ENCODE measurements at regions of chr13 and their contacts with region 1.

Region 1: DNA sequence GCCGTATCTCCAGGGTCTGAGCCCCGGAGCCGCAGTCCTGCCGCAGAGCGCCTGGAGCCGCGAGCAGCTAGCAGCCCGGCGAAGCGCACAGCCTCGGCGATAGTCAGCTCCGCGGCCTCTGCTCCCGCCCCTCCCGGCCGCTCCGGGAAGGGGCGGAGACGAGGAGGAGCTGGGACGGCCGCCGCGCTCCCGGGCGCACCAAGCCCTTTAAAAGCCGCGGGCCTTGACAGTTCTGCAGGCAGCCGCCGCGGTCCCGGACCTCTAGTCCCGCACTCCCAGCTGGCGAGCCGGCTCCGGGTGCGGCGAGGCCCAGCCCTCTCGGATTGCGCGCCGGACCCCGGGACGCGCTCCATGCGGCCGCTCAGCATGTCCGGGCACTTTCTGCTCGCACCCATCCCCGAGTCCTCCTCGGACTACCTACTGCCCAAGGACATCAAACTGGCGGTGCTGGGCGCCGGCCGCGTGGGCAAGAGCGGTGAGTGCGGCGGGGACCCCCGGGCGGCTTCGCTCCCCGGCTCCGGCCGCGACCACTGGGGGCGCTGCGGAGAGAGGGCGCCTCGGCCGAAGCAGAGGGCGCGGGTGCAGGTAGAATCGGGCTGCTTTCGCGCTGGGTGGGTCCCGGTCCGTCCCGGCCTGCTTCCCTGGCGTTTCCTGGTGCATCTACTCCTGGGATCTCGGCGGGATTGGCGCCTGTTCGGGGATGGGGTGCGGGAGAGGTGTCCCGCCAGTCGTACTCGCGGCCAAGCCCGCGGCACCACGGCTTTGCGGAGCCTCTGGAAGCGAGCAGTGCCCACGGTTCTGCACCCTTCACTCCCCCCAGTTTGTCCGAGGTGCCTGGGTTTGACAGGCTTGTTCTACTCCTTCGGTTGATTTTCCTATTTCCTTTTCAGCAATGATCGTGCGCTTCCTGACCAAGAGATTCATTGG is at the start of gene RASL11A:
- DNase-seq: peak; percentile 65
- H3K4me3 Mint-ChIP-seq: peak within 1 kb of the TSS; percentile 83
- H3K27ac Mint-ChIP-seq: no peak within 1 kb of the TSS
- H3K4me1 Mint-ChIP-seq: peaks cover 8% of the 10 kb centered on the region
- H3K27me3 Mint-ChIP-seq: peaks cover 3% of the 10 kb centered on the region
- total RNA-seq, gene RASL11A: 1.5 to 1.6 TPM

Region 2: GRCh38 chr13:26971990-26972887 is 298.6 kb before region 1 on chr13:
- CTCF ChIA-PET with region 1: no interaction called
- intact Hi-C with region 1: loop called (anchors 1 kb)
- DNase-seq: peak; percentile 65
- H3K4me3 Mint-ChIP-seq: no peak overlapping the region
- H3K27ac Mint-ChIP-seq: peak overlapping the region; percentile 1
- H3K4me1 Mint-ChIP-seq: no peaks in the 10 kb centered on the region
- H3K27me3 Mint-ChIP-seq: no peaks in the 10 kb centered on the region

Region 3: GRCh38 chr13:27283906-27284493 is 13.1 kb after region 1 on chr13:
- CTCF ChIA-PET with region 1: interaction called, 11 read pairs
- intact Hi-C with region 1: no loop called
- DNase-seq: peak; percentile 43
- H3K4me3 Mint-ChIP-seq: no peak overlapping the region
- H3K27ac Mint-ChIP-seq: no peak overlapping the region
- H3K4me1 Mint-ChIP-seq: no peaks in the 10 kb centered on the region
- H3K27me3 Mint-ChIP-seq: no peaks in the 10 kb centered on the region

Region 4: GRCh38 chr13:27339299-27339698 is 68.4 kb after region 1 on chr13:
- CTCF ChIA-PET with region 1: interaction called, 4 read pairs
- intact Hi-C with region 1: loop called (anchors 1 kb)
- DNase-seq: peak; percentile 65
- H3K4me3 Mint-ChIP-seq: no peak overlapping the region
- H3K27ac Mint-ChIP-seq: no peak overlapping the region
- H3K4me1 Mint-ChIP-seq: peaks cover 2% of the 10 kb centered on the region
- H3K27me3 Mint-ChIP-seq: no peaks in the 10 kb centered on the region

Region 5: DNA sequence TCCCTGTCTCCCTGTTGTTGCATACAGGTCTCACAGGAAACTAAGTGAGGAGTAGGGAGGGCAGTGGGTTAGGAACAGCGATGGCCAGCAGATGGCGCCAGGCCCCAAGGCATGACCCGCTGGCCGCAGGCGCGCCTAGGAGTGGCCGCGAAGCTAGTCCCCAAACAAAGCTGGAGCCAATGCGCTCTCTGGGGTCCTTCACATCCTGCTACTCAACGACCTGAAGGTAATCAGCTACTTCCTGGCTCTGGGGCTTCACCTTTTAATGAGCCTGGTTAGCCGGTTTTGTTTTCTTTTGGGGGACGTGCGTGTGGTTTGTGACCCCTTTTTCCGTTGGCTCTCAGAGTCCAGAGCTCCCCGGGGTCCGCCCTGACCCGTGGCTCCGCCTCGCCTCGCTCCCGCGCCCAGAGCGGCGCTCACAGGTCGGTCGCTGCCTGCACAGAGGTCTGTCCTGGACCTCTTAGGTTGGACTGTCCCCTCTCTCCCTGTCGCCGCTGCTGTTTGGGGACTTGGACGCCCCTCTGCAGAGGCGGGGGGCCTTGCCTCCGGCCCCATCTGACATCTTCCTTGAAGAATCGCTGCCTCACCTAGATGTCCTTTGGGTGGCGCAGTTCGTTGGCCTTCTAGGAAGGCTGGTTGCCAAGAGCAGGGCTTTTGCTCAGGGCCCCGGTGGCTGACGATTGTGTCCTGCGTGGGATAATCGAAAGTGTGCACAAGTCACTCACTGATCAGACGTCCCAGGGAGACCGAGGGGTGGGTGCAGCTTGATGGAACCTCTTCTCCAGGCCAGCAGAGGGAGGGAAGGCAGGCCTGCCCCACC is 91.4 kb after region 1 on chr13:
- CTCF ChIA-PET with region 1: interaction called, 6 read pairs
- intact Hi-C with region 1: loop called (anchors 5 kb)
- DNase-seq: peak; percentile 85
- H3K4me3 Mint-ChIP-seq: no peak overlapping the region
- H3K27ac Mint-ChIP-seq: no peak overlapping the region
- H3K4me1 Mint-ChIP-seq: no peaks in the 10 kb centered on the region
- H3K27me3 Mint-ChIP-seq: peaks cover 18% of the 10 kb centered on the region